Activated naive CD4-positive, alpha-beta T cell treated with anti-CD3 and anti-CD28 coated beads for 36 hours (primary cell): ENCODE measurements at regions of chr4 and their contacts with region 1.

Region 1: DNA sequence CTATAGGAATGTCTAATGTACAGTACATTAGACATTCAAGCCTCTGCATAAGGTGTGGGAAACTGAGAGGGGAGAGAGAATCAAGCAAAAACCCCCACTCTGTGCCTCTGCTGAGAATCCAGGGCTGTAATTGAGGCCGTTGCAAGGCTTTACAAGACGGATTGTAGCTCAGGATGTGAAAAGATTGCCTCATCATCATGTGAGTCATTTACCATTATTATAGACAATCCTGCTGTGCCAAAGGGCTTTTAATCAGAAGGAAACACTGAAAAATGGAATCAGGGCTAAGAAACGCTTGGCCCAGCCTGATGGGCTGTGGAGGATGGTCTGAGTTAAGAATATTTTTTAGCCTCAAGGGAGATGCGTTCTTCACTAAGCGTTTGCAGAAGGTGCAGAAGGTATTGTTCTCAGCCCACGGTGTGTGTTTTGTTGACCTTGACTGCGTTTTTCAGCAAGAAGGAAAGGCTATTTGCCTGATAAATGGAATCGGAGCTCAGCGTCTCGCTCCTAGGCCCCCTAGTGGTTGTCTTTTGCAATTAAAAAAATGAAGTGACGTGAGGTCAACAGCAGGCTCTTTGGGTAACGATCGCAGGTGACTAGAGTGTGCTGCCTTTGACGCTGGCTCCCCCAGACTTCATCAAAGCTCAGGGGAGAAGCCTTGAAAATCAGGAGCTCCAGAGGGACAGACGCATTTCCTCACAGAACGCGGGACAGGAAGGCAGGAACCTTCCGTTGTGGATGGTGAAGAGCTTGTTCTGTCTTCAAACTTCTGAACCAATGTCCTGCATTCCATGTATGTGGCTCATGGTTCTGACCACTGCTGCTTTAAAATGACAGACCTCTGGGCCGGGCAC is 18.1 kb upstream of the CHRNA9 start:
- DNase-seq: peak; percentile 71
- H3K4me3 Mint-ChIP-seq: peak overlapping the region; percentile 86
- H3K27ac Mint-ChIP-seq: peak overlapping the region; percentile 100
- H3K4me1 Mint-ChIP-seq: peaks cover 49% of the 10 kb centered on the region
- H3K27me3 Mint-ChIP-seq: no peaks in the 10 kb centered on the region

Region 2: GRCh38 chr4:40149960-40150385 is 167.0 kb before region 1 on chr4:
- CTCF ChIA-PET with region 1: interaction called, 16 read pairs
- intact Hi-C with region 1: loop called (anchors 2 kb)
- DNase-seq: peak; percentile 86
- H3K4me3 Mint-ChIP-seq: no peak overlapping the region
- H3K27ac Mint-ChIP-seq: peak overlapping the region; percentile 70
- H3K4me1 Mint-ChIP-seq: peaks cover 36% of the 10 kb centered on the region
- H3K27me3 Mint-ChIP-seq: no peaks in the 10 kb centered on the region

Region 3: DNA sequence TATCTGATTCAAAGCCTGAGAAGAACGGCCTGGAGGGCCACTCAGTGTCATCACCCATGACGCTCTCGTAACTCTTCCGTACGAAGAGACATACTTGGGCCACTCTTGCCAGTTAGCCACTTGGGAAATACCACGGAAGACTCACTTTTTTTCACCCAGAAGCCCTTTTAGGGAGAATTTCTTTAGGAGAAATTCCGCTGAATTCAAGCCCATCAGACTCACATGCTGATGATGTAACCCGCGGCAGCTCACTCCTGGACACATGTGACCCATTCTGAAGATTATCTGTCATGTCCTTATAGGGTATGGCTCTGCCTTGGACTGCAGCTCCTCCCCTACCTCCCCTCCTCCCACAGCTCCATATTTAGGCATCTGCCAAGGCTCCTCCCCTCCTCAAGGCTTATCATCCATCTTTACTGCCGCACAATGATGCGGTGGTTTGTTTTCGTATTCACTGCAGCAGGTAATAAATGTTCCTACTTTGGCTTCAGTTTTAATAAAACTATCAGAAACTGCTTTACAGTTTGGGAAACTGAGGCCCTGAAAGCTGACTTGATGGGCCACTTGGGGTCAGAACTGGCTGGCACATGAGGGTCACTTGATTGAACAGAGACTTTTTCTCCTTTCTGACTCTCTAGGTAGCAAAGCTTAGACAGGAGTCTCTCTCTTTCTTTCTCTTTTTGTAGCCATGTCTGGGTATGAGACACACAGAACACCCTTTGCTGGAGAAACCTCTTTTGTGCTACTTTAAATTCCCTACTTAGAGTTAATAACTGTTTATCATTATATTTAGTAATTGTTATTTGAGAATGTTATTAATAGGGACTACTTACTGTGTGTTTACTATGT is 78.1 kb before region 1 on chr4:
- CTCF ChIA-PET with region 1: interaction called, 10 read pairs
- intact Hi-C with region 1: no loop called
- DNase-seq: peak; percentile 90
- H3K4me3 Mint-ChIP-seq: peak overlapping the region; percentile 74
- H3K27ac Mint-ChIP-seq: peak overlapping the region; percentile 89
- H3K4me1 Mint-ChIP-seq: peaks cover 91% of the 10 kb centered on the region
- H3K27me3 Mint-ChIP-seq: no peaks in the 10 kb centered on the region

Region 4: GRCh38 chr4:40283968-40284367 is 33.0 kb before region 1 on chr4:
- CTCF ChIA-PET with region 1: interaction called, 10 read pairs
- intact Hi-C with region 1: loop called (anchors 1 kb)
- DNase-seq: peak; percentile 94
- H3K4me3 Mint-ChIP-seq: peak overlapping the region; percentile 19
- H3K27ac Mint-ChIP-seq: peak overlapping the region; percentile 94
- H3K4me1 Mint-ChIP-seq: peaks cover 70% of the 10 kb centered on the region
- H3K27me3 Mint-ChIP-seq: no peaks in the 10 kb centered on the region

Region 5: GRCh38 chr4:40502934-40503333 is 185.9 kb after region 1 on chr4:
- CTCF ChIA-PET with region 1: no interaction called
- intact Hi-C with region 1: loop called (anchors 1 kb)
- DNase-seq: peak; percentile 9
- H3K4me3 Mint-ChIP-seq: no peak overlapping the region
- H3K27ac Mint-ChIP-seq: peak overlapping the region; percentile 71
- H3K4me1 Mint-ChIP-seq: peaks cover 21% of the 10 kb centered on the region
- H3K27me3 Mint-ChIP-seq: no peaks in the 10 kb centered on the region

Region 6: DNA sequence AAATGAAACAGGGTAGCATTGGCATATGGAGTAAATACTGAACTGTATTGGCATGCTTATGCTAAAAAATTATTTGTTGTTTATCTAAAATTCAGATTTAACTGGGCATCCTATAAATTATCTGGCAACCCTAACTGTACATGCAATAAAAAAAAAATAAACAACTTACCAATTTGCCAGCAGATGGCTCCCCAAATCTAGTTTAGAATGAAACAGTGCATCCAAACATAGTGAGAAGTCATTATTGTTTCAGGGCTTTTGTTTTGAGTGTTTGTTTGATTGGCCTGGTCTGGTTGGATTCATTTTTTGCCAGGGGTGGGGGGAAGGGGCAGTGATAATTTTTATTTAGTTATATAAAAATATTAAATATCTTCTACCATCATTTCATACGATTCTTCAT is 419.9 kb after region 1 on chr4:
- CTCF ChIA-PET with region 1: no interaction called
- intact Hi-C with region 1: no loop called
- DNase-seq: peak; percentile 18
- H3K4me3 Mint-ChIP-seq: no peak overlapping the region
- H3K27ac Mint-ChIP-seq: no peak overlapping the region
- H3K4me1 Mint-ChIP-seq: peaks cover 9% of the 10 kb centered on the region
- H3K27me3 Mint-ChIP-seq: peaks cover 2% of the 10 kb centered on the region